ENCODE measurements at regions of chr5 and their contacts with region 1.

Region 1: DNA sequence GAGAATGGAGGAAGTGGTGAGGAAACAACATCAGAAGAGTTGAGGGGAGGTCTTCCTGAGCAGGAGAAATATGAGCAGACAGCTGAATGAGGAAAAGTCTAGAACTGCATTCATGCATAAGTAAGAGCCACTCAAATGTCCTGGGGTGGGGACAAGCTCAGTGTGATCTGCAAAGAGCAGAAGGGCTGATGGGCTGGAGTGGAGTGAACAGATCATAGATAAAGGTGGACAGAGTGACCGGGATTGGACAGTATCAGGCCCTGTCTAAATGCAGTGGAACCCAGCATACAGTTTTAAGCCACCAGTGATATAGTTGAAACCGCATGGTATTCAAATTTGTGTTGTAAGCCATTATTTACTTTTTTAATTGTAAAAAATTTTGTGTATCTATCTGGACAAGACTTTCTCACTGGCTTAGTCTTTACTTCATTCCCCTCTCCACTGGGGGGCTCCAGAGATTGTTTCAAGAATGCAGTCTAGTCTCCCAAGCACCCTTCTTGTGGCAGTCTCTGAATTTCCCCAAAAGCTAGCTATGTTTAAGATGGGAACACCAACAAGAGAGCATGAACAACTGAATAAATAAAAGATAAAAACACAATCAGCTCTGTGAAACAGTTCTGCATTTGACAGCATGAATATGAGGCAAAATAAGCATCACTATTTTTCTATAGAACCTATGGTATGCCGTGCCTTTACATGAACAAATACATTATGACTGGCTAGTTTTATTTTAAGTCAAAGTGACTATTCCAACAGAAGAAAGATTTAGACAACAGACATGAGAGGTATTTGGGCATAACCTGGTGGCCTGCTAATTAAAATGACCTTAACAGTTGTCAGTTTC is 10.7 kb upstream of the STK32A start:
- DNase-seq: peak in 32 of 42 donors; percentile 2 to 79 (median 50)

Region 2: GRCh38 chr5:147267082-147267832 is 43.1 kb after region 1 on chr5:
- intact Hi-C with region 1: no loop called
- DNase-seq: no peak

Region 3: GRCh38 chr5:147327421-147327820 is 103.3 kb after region 1 on chr5:
- intact Hi-C with region 1: no loop called
- DNase-seq: no peak

Region 4: DNA sequence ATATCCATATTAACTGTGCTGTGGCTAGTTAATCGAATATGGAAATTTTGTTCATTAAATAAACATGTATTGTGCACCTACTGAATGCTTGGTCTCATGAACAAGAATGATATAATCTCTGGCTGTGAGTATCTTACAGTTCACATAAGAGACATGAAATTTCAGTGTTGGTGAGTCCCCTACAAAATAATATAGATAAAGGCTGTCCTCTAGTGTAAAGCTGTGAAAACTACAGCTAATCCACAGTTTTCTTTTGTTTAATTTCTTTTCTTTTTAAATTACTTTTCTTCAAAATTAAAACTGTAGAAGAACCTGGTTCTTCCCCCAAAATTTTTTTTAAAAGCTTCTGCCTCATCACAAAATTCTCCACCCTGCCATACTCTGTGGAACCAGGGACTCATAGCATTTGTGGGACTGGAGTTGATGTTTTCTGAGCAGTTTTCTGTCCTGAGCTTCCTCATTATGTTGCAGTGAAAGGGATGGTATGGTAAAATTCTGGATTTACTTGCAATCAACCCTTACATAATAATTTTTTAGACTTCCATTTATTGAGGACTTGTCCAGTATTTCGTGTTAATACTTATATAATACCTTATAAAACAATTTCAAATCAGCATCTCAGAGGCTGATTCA is 145.7 kb after region 1 on chr5:
- intact Hi-C with region 1: loop called (anchors 10 kb)
- DNase-seq: no peak

Region 5: GRCh38 chr5:147567917-147568598 is 343.9 kb after region 1 on chr5:
- intact Hi-C with region 1: loop called (anchors 10 kb)
- DNase-seq: no peak

Measured in head of caudate nucleus (tissue), 42 donors.